Aorta (tissue), 5 donors: ENCODE measurements at regions of chrX and their contacts with region 1.

Region 1: GRCh38 chrX:120514236-120514635 is 45.1 kb upstream of the LAMP2 start:
- DNase-seq: no peak
- ATAC-seq: no peak
- H3K4me3 ChIP-seq: no peak overlapping the region
- H3K27ac ChIP-seq: no peak overlapping the region
- H3K4me1 ChIP-seq: no peaks in the 10 kb centered on the region
- H3K27me3 ChIP-seq: no peaks in the 10 kb centered on the region

Region 2: DNA sequence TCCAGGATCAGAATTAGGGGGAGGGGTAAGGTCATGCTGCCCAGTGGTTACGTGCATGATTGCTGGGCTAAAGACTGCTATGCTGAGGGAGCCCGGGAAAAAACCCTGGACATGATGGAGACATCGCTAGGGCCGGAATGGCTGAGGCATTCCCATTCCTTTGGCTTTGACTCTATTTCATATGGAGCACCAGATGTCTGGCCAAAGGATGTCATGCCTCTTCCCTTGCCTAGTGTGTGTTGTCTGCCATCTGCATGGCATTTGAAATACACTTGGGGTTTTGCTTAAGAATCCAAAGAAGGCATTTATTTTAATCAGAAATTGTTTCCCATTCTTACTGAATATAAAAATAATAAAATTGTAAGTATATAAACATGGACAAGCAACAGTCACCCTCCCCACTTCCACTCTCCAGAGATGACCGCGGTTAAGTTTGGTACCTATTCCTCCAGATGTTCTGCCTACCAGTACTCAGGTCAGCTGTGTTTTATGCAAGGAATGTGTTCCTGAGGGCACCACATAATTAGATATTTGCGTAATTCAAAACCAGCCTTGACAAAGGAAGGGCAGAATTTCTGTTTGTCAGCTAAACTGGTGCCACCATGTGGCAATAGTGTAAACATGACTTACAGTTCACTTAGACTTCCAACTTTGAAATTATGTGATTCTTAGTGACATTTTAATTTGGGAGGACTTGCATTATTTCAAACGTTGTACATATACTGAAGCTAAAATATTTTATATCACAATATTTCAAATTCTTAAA is 255.5 kb after region 1 on chrX:
- intact Hi-C with region 1: loop called in 1 of 2 experiments (anchors 5 kb)
- DNase-seq: no peak
- ATAC-seq: no peak
- H3K4me3 ChIP-seq: no peak overlapping the region
- H3K27ac ChIP-seq: no peak overlapping the region
- H3K4me1 ChIP-seq: no peaks in the 10 kb centered on the region
- H3K27me3 ChIP-seq: no peaks in the 10 kb centered on the region